ENCODE measurements at regions of chr5 and their contacts with region 1.

Region 1: DNA sequence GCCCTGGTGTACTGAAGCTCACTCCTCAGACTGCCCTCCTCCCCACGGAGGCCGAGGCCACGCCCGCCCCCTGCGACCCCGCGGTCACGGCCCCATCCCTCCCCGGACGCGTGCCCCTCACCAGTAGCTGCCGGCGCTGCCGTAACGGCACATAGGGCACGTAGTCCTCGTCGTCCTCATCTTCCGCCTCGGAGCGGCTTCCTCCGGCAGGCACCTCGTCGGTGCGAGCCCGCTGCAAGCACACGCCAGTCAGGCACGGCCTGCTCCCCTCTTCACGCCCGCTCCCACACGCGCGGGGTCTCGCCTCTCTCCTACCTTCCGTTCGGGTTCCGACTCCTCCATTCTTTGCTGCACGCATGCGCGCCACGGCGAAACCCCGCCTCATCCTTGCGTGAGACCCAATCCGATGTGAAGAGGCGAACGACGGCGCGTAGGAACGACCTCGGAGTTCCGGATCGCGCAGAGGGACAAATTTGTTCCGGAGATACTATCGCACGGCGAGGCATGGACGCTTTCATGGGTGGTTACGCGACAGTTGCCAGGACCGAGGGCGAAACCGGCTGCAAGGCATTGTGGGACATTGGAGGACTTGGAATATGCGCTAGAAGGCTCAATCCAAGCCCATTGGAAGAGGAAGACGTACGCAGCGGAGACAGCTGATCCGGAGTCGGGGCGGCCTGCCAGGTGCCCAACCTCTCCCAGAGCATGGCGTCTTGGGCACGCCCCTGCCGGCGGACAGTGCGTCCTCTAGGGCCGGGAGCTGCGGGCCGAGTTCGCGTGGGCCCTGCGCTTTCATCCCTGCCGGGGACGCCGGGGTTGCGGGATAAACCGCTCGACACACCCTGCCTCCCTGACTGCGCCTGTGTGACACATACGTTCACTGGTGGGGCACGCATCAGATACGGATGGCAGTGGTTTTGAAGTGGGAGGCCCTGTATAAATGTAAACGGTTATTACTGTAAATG is at the start of gene DDX41:
- DNase-seq: peak; percentile 100
- H3K4me3 Mint-ChIP-seq: peak within 1 kb of the TSS; percentile 85
- H3K27ac Mint-ChIP-seq: peak within 1 kb of the TSS; percentile 91
- H3K4me1 Mint-ChIP-seq: peaks cover 34% of the 10 kb centered on the region
- H3K27me3 Mint-ChIP-seq: no peaks in the 10 kb centered on the region
- CTCF ChIP-seq: no peak
- total RNA-seq, gene DDX41: 125 and 135 TPM in 2 replicates

Region 2: DNA sequence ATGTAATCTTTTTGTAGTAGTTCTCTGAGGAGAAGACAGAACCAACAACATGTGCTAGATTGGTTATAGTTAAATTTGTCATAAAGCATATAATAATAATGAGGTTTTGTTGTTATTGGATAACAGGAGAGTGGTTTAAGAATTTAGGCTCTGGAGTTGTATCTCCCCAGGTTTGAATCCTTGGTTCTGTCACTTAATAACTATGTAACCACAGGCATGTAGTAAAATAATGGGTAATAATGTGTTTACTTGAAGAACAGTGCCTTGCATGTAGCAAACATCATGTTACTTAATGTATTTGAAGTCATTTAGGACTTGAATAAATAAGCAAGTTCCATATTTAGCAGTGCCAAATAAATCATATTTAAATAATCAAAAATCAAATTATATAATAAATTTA is 327.5 kb before region 1 on chr5:
- CTCF ChIA-PET with region 1: no interaction called
- POLR2A ChIA-PET with region 1: no interaction called
- intact Hi-C with region 1: no loop called
- DNase-seq: no peak
- H3K4me3 Mint-ChIP-seq: no peak overlapping the region
- H3K27ac Mint-ChIP-seq: peak overlapping the region; percentile 61
- H3K4me1 Mint-ChIP-seq: peaks cover 18% of the 10 kb centered on the region
- H3K27me3 Mint-ChIP-seq: no peaks in the 10 kb centered on the region
- CTCF ChIP-seq: no peak

Region 3: DNA sequence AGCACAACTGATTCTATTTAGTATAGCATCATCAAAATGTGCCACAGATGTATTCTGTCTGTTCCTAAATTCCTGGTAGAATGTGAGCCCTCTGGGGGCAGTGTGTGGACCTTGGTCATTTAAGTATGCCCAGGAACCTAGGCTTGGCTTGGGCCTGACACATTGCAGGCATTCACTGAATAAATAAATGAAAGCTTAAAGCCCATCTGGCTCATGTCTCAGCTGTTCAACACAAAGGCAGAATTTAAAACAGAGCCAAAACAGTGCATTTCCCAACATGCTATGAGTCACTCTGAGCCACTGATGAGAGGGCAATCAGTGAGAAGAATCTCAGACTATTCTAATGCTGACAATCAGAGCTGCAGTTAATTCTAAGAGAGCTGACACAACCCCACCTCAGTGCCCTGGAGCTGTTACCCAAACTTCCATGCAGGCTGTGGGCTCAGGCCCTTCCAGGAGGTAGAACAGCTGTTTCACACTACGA is 29.4 kb after region 1 on chr5:
- CTCF ChIA-PET with region 1: interaction called, 12 read pairs
- POLR2A ChIA-PET with region 1: interaction called, 60 read pairs
- intact Hi-C with region 1: loop called (anchors 2 kb)
- DNase-seq: peak; percentile 100
- H3K4me3 Mint-ChIP-seq: peak overlapping the region; percentile 59
- H3K27ac Mint-ChIP-seq: peak overlapping the region; percentile 97
- H3K4me1 Mint-ChIP-seq: peaks cover 51% of the 10 kb centered on the region
- H3K27me3 Mint-ChIP-seq: no peaks in the 10 kb centered on the region
- CTCF ChIP-seq: no peak

Region 4: GRCh38 chr5:177554474-177555111 is 37.7 kb after region 1 on chr5 and contains the start of gene FAM193B:
- CTCF ChIA-PET with region 1: no interaction called
- POLR2A ChIA-PET with region 1: interaction called, 10 read pairs
- intact Hi-C with region 1: loop called (anchors 2 kb)
- DNase-seq: peak; percentile 95
- H3K4me3 Mint-ChIP-seq: peak within 1 kb of the TSS; percentile 84
- H3K27ac Mint-ChIP-seq: peak within 1 kb of the TSS; percentile 63
- H3K4me1 Mint-ChIP-seq: peaks cover 22% of the 10 kb centered on the region
- H3K27me3 Mint-ChIP-seq: no peaks in the 10 kb centered on the region
- CTCF ChIP-seq: no peak
- total RNA-seq, gene FAM193B: 73.5 and 80.4 TPM in 2 replicates

Region 5: GRCh38 chr5:177568326-177568725 is 51.4 kb after region 1 on chr5:
- CTCF ChIA-PET with region 1: no interaction called
- POLR2A ChIA-PET with region 1: no interaction called
- intact Hi-C with region 1: no loop called
- DNase-seq: no peak
- H3K4me3 Mint-ChIP-seq: no peak overlapping the region
- H3K27ac Mint-ChIP-seq: no peak overlapping the region
- H3K4me1 Mint-ChIP-seq: no peaks in the 10 kb centered on the region
- H3K27me3 Mint-ChIP-seq: peaks cover 11% of the 10 kb centered on the region
- CTCF ChIP-seq: no peak

Region 6: DNA sequence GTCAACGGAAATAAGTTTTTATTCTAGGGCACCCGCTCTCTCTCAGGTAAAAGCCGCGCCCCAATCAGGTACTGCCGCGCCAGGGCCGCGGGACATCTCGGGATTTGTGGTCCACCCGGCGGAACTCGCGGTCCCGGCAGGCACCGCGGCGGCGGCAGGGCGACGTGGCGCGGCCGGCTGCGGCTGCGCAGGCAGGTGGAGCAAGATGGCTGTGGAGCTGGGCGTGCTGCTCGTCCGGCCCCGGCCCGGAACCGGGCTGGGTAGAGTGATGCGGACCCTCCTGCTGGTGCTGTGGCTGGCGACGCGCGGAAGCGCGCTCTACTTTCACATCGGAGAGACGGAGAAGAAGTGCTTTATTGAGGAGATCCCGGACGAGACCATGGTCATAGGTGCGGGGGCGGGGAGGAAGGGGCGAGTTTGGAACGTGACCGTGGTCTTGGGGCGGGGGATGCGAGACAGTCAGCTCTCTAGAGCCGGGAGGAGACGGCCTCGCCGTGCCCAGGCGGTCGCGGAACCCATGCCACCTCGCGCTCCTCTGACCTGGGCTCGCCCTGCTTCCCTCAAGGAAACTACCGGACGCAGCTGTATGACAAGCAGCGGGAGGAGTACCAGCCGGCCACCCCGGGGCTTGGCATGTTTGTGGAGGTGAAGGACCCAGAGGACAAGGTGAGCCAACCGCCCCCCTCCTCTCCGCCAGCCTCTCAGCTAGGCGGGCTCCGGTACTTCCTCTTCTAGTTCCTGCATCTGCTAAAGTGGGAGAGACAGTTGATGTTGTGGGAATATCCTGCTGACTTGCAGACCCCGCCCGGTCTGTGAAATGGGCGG is 75.3 kb after region 1 on chr5 and contains the start of gene TMED9:
- CTCF ChIA-PET with region 1: no interaction called
- POLR2A ChIA-PET with region 1: interaction called, 11 read pairs
- intact Hi-C with region 1: no loop called
- DNase-seq: peak; percentile 86
- H3K4me3 Mint-ChIP-seq: peak within 1 kb of the TSS; percentile 85
- H3K27ac Mint-ChIP-seq: peak within 1 kb of the TSS; percentile 96
- H3K4me1 Mint-ChIP-seq: peaks cover 7% of the 10 kb centered on the region
- H3K27me3 Mint-ChIP-seq: peaks cover 36% of the 10 kb centered on the region
- CTCF ChIP-seq: no peak
- total RNA-seq, gene TMED9: 301 and 365 TPM in 2 replicates

Region 7: DNA sequence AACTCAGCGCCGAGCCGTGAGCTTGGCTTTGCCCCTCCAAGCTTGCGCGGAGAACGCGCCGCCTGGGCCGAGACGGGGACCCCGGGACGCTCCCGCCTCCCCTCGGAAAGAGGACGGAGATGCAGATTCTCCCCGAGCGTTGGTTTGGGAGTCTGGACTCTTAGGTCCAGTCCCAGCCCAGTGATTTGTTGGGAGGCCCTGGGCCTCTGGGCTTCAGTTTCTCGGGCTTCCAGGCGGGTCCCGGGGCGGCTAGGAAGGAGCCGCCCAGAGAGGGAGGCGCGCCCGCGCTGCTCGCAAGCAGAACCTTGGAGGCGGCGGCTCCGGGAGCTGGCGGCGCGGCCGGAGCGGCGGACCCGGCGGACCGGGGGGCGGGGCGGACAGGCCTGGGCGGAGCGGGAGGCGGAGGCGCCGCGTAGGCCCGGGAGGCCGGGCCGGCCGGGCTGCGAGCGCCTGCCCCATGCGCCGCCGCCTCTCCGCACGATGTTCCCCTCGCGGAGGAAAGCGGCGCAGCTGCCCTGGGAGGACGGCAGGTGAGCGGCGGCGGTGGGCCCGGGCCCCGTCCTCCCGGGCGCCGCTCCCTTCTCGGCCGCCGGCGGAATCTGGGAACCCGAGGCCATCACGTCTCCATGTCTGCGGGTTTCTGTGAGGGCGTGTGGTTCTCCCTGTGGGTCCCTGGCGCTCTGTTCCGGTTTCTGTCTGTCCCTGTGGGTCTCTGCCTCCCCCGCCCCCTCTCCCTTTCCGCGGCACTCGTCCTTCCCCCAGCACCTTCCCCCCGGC is 83.0 kb after region 1 on chr5 and contains the start of gene B4GALT7:
- CTCF ChIA-PET with region 1: interaction called, 3 read pairs
- POLR2A ChIA-PET with region 1: interaction called, 8 read pairs
- intact Hi-C with region 1: loop called (anchors 2 kb)
- DNase-seq: peak; percentile 85
- H3K4me3 Mint-ChIP-seq: peak within 1 kb of the TSS; percentile 85
- H3K27ac Mint-ChIP-seq: peak within 1 kb of the TSS; percentile 93
- H3K4me1 Mint-ChIP-seq: peaks cover 35% of the 10 kb centered on the region
- H3K27me3 Mint-ChIP-seq: no peaks in the 10 kb centered on the region
- CTCF ChIP-seq: no peak
- total RNA-seq, gene B4GALT7: 37.9 and 38.8 TPM in 2 replicates